Right cardiac atrium (tissue), 5 donors: ENCODE measurements at regions of chr10 and their contacts with region 1.

Region 1: DNA sequence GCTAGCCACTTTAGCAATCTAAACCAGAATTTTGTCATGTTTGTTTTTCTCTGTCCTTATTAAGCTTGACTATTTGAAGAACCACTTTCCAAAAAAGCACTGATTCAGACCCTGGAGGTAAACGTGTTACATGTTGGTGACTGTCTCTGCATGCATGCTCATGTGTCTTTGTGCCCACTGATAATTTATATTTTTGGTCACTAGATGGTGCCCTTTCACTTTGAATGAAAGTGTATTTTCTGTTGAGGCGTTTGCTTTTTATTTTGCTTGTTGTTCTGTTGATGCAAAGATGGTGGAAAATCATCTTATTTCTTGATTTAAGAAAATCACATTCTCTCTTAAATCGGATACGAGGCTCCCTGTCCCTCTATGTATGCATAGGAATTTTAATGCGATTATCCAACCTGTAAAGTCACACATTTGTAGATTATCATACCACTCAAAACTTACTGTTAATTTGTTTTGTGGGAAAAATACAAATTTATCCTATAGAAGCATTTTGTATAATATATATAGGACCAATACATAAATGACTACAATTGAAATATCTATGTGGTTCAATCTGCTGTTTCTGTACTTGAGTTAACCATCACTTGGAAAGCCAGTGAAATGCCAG is 269.3 kb downstream of the BICC1 start:
- DNase-seq: no peak
- ATAC-seq: peak in 1 of 2 donors; percentile 27
- H3K4me3 ChIP-seq: no peak overlapping the region
- H3K27ac ChIP-seq: no peak overlapping the region
- H3K4me1 ChIP-seq: peaks cover 3% of the 10 kb centered on the region
- H3K27me3 ChIP-seq: no peaks in the 10 kb centered on the region

Region 2: GRCh38 chr10:58932126-58932525 is 150.1 kb after region 1 on chr10:
- intact Hi-C with region 1: loop called in 1 of 4 experiments (anchors 10 kb)
- DNase-seq: no peak
- ATAC-seq: no peak
- H3K4me3 ChIP-seq: no peak overlapping the region
- H3K27ac ChIP-seq: no peak overlapping the region
- H3K4me1 ChIP-seq: peaks cover 6% of the 10 kb centered on the region
- H3K27me3 ChIP-seq: no peaks in the 10 kb centered on the region

Region 3: DNA sequence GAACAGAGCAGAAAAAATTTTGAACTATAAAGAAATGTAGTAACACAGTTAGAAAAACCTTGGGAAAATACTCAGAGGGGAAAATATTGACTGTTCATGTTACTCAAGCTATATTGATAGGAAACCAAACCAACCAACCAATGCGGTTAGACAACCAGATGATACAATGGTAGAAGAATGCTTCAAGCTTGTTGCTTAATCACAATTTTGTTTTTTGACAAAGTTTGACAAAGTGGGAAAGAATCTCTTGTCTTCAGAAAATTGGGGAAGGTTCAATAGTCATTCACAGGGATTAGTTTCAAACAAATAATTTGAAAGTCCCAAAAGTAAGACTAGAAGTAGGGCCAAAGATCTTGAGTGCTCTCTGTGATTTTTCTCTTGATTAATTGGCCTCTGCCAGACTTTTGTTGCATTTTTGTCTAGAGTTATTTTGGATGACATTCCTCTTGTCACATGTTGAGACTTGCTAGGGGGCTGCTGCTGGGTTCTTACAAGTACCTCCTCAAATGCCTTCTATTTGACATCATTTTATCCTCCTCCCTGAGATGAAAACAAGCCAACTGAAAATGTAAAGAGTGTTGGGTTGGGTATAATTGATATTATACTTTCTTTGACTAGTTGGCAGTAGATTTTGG is 161.4 kb after region 1 on chr10:
- intact Hi-C with region 1: loop called in 2 of 4 experiments (anchors 10 kb)
- DNase-seq: no peak
- ATAC-seq: no peak
- H3K4me3 ChIP-seq: no peak overlapping the region
- H3K27ac ChIP-seq: no peak overlapping the region
- H3K4me1 ChIP-seq: peaks cover 2% of the 10 kb centered on the region
- H3K27me3 ChIP-seq: no peaks in the 10 kb centered on the region

Region 4: GRCh38 chr10:58952747-58953466 is 170.9 kb after region 1 on chr10:
- intact Hi-C with region 1: loop called in 2 of 4 experiments (anchors 10 kb)
- DNase-seq: peak in 1 of 3 donors; percentile 16
- ATAC-seq: peak; percentile 75 to 85
- H3K4me3 ChIP-seq: no peak overlapping the region
- H3K27ac ChIP-seq: peak overlapping the region; percentile 72
- H3K4me1 ChIP-seq: no peaks in the 10 kb centered on the region
- H3K27me3 ChIP-seq: no peaks in the 10 kb centered on the region

Region 5: DNA sequence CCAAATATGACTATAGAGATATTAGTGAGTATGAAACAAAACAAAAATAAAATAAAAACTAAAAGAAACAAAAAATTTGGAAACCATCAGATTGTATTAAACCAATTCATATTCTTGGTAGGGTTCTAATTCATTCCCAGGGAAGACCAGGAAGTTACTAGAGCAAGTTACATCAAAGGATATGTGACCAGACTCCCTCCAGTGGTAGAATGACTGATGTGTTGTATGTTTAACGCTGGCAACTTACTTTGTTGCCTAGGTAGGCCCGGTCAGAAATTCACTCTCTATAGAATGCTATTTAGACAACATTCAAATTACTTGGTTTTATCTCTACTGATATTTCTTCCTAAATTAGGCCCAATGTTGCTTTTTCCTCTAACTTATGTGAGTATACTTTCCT is 399.7 kb after region 1 on chr10:
- intact Hi-C with region 1: loop called in 1 of 4 experiments (anchors 10 kb)
- DNase-seq: no peak
- ATAC-seq: peak; percentile 57 to 73
- H3K4me3 ChIP-seq: no peak overlapping the region
- H3K27ac ChIP-seq: no peak overlapping the region
- H3K4me1 ChIP-seq: peaks cover 3% of the 10 kb centered on the region
- H3K27me3 ChIP-seq: no peaks in the 10 kb centered on the region

Region 6: DNA sequence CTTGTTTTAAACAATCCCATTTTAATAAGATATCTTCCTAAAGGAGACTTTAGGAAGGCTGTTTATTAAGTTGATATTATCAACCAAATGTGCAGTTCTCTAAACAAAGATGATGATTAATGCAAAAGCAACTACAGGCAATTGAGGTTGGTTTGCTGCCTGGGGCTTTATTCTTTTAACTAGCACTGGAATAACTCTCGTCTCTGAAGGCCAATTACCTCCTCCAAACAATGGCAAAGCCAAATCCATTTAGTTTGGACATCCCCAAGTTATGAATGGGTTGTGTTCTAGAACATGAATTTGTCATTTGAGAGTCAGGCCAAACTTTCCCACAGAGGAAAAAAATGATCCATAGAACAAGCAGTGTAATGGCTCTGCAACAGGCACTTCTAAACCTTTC is 813.6 kb after region 1 on chr10:
- intact Hi-C with region 1: no loop called
- DNase-seq: no peak
- ATAC-seq: no peak
- H3K4me3 ChIP-seq: no peak overlapping the region
- H3K27ac ChIP-seq: no peak overlapping the region
- H3K4me1 ChIP-seq: no peaks in the 10 kb centered on the region
- H3K27me3 ChIP-seq: no peaks in the 10 kb centered on the region